A549 (cell line): ENCODE measurements at regions of chr9 and their contacts with region 1.

Region 1: GRCh38 chr9:113979343-113980127 is 98.6 kb downstream of the AMBP start:
- DNase-seq: no peak
- ATAC-seq: no peak
- H3K4me3 ChIP-seq: no peak overlapping the region
- H3K27ac ChIP-seq: no peak overlapping the region
- H3K4me1 ChIP-seq: peaks cover 3% of the 10 kb centered on the region; the same call in 2 of the 3 replicates
- CTCF ChIP-seq: no peak
- EP300 ChIP-seq: no peak
- POLR2A ChIP-seq: no peak
- RAD21 ChIP-seq: no peak

Region 2: DNA sequence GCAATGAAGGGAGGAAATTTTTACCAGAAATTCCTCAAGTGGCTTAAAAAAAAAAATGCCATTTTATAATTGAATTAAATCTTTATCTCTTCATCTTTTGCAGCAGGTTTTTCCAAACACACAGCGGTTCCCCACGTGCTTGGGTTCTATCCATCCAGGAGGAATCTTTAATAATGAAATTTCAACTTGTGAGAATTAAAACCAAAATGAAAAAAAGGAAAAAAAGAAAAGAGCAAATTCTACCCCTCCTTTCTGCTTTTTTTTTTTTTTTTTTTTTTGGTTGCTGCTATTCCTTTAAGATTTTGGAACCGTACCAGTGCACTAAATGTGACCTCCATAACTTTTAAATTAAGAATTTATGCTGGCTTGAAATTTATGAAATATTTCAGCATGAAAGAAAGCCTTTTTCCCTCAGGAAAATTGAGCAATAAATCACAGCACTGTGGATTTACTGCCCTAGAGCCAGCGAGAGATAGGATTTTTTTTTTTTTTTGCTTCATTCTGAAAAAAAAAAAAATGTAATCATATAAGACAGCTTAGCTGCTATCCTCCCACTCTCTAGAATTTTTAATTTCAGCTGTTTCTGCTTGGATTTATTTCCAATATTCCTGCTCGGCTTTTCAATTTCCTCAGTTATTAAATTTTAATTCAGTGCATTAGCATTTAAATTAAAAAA is 14.9 kb before region 1 on chr9:
- CTCF ChIA-PET with region 1: interaction called, 15 read pairs
- POLR2A ChIA-PET with region 1: no interaction called
- DNase-seq: no peak
- ATAC-seq: no peak
- H3K4me3 ChIP-seq: no peak overlapping the region
- H3K27ac ChIP-seq: no peak overlapping the region
- H3K4me1 ChIP-seq: no peaks in the 10 kb centered on the region
- CTCF ChIP-seq: no peak
- EP300 ChIP-seq: no peak
- POLR2A ChIP-seq: no peak
- RAD21 ChIP-seq: no peak